ENCODE measurements at regions of chr2 and their contacts with region 1.

Region 1: DNA sequence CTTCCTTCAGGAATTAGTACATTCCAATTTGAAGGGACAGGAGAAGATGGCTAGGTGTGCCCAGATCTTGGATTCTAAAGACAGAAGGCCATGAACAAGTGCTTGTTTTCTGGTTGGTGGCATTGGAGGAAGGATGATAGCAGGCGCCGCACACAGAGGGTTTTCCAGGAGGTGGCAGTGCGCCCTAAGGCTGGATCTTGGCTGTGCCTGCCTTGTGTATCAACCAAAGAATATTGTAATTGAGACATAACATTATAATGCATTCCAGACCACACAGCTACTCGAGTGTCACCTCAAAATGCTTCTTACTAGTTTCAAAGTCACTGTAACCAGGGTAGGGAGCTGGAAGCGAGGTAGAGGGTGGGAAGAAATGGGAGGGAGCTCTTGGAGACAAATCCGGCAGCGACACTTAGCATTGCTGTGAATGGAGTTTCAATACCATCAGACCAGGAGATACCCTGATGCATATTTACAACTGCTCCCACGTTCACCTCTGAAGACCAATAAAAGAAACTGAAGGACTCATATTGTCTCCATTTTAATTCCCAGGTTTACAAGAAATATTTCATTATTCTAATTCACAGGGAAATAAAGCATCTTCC is 42.5 kb downstream of the CPO start:
- H3K4me3 Mint-ChIP-seq: no peak overlapping the region
- H3K27ac Mint-ChIP-seq: no peak overlapping the region
- H3K4me1 Mint-ChIP-seq: peaks cover 23% of the 10 kb centered on the region
- H3K27me3 Mint-ChIP-seq: no peaks in the 10 kb centered on the region

Region 2: GRCh38 chr2:206800506-206801417 is 181.1 kb before region 1 on chr2:
- intact Hi-C with region 1: loop called (anchors 10 kb)
- H3K4me3 Mint-ChIP-seq: peak overlapping the region; percentile 55
- H3K27ac Mint-ChIP-seq: peak overlapping the region; percentile 20
- H3K4me1 Mint-ChIP-seq: peaks cover 29% of the 10 kb centered on the region
- H3K27me3 Mint-ChIP-seq: no peaks in the 10 kb centered on the region

Region 3: GRCh38 chr2:206890926-206891325 is 90.9 kb before region 1 on chr2:
- intact Hi-C with region 1: no loop called
- H3K4me3 Mint-ChIP-seq: no peak overlapping the region
- H3K27ac Mint-ChIP-seq: no peak overlapping the region
- H3K4me1 Mint-ChIP-seq: no peaks in the 10 kb centered on the region
- H3K27me3 Mint-ChIP-seq: no peaks in the 10 kb centered on the region

Region 4: GRCh38 chr2:207625018-207625907 is 643.4 kb after region 1 on chr2 and contains the start of gene METTL21A:
- intact Hi-C with region 1: no loop called
- H3K4me3 Mint-ChIP-seq: peak within 1 kb of the TSS; percentile 91
- H3K27ac Mint-ChIP-seq: peak within 1 kb of the TSS; percentile 95
- H3K4me1 Mint-ChIP-seq: peaks cover 45% of the 10 kb centered on the region
- H3K27me3 Mint-ChIP-seq: no peaks in the 10 kb centered on the region

Measured in dendritic cell treated with granulocyte-macrophage colony-stimulating factor and Interleukin-4, amounts not matched to agents 40 ng/mL and 50 ng/mL, for 4 days (primary cell).